AG04450 (cell line): ENCODE measurements at regions of chr3 and their contacts with region 1.

Region 1: GRCh38 chr3:98817547-98818041 is 54.5 kb downstream of the ST3GAL6 start:
- DNase-seq: peak; percentile 21
- H3K4me3 ChIP-seq: no peak overlapping the region
- H3K27ac ChIP-seq: no peak overlapping the region
- H3K27me3 ChIP-seq: no peaks in the 10 kb centered on the region
- CTCF ChIP-seq: peak; percentile 59

Region 2: GRCh38 chr3:98593046-98593936 is 224.3 kb before region 1 on chr3 and contains the start of gene CPOX:
- CTCF ChIA-PET with region 1: interaction called, 105 read pairs
- POLR2A ChIA-PET with region 1: no interaction called
- DNase-seq: peak; percentile 60
- H3K4me3 ChIP-seq: peak within 1 kb of the TSS; percentile 81
- H3K27ac ChIP-seq: peak within 1 kb of the TSS; percentile 47
- H3K27me3 ChIP-seq: no peaks in the 10 kb centered on the region
- CTCF ChIP-seq: no peak
- polyA plus RNA-seq, gene CPOX: 15.7 and 19.6 TPM in 2 replicates

Region 3: GRCh38 chr3:98602078-98602678 is 215.4 kb before region 1 on chr3:
- CTCF ChIA-PET with region 1: interaction called, 212 read pairs
- POLR2A ChIA-PET with region 1: no interaction called
- DNase-seq: peak; percentile 47
- H3K4me3 ChIP-seq: no peak overlapping the region
- H3K27ac ChIP-seq: no peak overlapping the region
- H3K27me3 ChIP-seq: no peaks in the 10 kb centered on the region
- CTCF ChIP-seq: peak; percentile 85

Region 4: DNA sequence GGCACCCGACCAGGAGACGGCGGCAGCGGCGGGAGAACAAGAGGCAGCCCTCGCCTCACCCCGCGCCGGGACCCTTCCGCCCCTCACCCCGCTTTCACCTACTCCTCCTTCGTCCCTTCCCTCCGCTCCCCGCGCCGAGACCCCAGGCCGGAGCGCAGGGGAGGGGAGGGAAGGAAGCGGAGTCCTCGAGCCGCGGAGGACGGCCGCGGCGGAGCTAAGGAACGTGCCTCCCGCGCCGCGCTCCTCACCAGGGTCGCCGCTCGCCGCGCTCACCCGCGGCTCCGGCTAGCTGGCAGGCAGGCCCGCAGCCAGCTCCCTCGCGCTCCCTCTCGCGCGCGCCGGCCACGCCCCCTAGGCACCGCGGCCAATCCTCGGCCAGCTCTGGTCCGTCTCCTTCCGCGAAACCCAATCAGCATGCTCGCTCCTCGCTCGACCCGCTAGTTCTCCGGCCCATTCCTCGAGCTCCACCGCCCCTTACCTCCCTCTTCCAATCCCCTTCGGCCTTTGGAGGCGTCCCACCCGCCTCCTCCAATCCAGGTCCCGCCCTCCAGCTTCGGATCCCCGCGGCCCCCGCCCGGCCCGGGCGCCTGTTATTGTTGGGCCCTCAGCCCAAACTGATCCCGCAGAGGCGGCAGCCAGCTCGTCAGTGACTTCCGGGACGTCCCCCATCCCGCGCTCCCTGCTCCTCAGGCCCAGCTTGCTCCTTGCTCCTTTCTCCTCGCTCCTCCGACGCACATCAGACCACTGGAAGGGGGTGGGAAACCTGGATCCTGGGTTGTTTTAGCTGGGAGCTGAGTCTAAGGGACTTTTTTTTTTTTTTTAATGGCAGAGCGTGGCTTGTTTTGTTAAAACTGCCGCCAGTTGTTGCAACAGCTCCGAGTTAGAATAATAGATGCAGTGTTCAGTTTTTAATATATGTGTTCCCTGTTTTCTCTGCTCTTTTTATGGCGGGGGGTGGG is 84.1 kb after region 1 on chr3 and contains the start of gene DCBLD2:
- CTCF ChIA-PET with region 1: interaction called, 14 read pairs
- POLR2A ChIA-PET with region 1: interaction called, 8 read pairs
- DNase-seq: peak; percentile 99
- H3K4me3 ChIP-seq: peak within 1 kb of the TSS; percentile 89
- H3K27ac ChIP-seq: peak within 1 kb of the TSS; percentile 86
- H3K27me3 ChIP-seq: no peaks in the 10 kb centered on the region
- CTCF ChIP-seq: no peak
- polyA plus RNA-seq, gene DCBLD2: 158 and 202 TPM in 2 replicates

Region 5: DNA sequence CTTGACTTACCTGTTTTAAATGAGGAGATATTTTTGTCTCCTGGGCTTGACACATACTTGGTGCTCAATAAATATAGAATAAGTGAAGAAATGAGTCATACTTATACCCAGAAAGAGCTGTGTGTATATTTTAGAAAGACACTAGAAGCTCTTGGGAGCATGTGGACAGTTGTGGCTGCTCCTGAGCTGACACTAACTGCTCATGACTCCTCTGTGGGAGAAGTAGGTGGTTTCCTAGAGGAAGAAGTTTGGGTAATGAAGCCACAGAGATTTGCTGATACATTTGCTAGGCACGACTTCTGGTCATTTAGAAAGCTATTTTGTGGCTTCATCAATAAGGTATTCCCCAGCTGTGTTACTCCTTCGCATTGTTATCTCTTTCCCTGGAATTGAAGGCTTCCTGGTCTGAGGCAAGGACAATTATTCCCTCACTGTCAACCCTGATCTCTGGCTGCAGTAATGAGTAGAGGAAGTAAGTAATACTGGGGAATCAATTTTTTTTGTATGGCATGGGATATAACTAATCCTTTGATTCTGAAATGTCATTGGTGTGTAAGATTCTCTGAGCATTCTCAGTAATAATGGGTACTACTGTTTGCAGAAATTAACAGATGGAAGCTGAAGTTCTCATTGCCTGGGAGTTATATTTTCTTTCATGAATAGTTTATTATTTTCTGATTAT is 163.5 kb after region 1 on chr3:
- CTCF ChIA-PET with region 1: interaction called, 20 read pairs
- POLR2A ChIA-PET with region 1: no interaction called
- DNase-seq: no peak
- H3K4me3 ChIP-seq: peak overlapping the region; percentile 11; the same call in 1 of the 2 replicates
- H3K27ac ChIP-seq: no peak overlapping the region
- H3K27me3 ChIP-seq: no peaks in the 10 kb centered on the region
- CTCF ChIP-seq: no peak

Region 6: GRCh38 chr3:98986073-98986472 is 168.5 kb after region 1 on chr3:
- CTCF ChIA-PET with region 1: interaction called, 359 read pairs
- POLR2A ChIA-PET with region 1: no interaction called
- DNase-seq: peak; percentile 91
- H3K4me3 ChIP-seq: no peak overlapping the region
- H3K27ac ChIP-seq: no peak overlapping the region
- H3K27me3 ChIP-seq: no peaks in the 10 kb centered on the region
- CTCF ChIP-seq: no peak